HEK293T (cell line): ENCODE measurements at regions of chr1 and their contacts with region 1.

Region 1: DNA sequence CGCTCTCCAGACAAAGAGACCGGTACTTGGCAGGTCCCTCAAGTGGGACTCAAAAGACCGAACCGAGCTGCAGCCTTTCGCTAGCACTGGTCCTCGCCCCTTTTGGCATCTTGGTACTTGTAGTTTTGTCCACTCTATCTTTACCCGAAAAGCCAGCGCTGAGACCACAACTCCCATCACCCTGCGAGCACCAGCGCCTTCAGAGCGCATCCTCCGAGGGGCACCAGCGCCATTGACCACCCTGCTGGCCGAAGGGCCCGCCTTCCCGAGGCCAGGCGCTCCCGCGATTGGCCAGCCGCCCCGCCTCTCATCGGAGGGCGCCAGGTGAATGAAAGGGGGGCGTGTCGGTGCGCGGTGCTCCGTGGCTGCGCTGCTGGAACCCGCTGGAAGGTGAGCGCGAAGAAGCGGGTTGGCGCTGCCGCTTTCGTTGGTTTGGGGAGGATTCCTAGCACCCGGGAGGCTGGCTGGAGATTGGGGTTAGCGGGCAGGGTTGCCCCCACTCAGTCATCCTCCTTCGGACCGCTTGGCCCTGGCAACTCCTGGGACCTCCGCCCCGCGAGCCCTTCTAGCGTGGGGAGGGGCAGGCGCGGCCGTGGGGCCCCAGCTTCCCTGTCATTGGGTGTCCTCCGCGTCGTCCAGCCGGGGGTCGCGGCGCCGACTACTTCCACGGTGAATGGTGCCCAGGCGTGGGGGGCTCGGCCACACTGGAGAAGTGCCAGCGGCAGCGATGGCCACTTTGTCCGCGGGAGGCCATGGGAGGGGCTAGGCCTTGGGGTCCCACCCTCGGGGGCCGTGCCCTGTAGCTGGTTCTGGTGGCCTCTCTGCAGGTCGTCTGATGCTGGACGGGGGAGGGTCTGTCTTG is at the start of gene ZBTB8B:
- DNase-seq: peak; percentile 100

Region 2: DNA sequence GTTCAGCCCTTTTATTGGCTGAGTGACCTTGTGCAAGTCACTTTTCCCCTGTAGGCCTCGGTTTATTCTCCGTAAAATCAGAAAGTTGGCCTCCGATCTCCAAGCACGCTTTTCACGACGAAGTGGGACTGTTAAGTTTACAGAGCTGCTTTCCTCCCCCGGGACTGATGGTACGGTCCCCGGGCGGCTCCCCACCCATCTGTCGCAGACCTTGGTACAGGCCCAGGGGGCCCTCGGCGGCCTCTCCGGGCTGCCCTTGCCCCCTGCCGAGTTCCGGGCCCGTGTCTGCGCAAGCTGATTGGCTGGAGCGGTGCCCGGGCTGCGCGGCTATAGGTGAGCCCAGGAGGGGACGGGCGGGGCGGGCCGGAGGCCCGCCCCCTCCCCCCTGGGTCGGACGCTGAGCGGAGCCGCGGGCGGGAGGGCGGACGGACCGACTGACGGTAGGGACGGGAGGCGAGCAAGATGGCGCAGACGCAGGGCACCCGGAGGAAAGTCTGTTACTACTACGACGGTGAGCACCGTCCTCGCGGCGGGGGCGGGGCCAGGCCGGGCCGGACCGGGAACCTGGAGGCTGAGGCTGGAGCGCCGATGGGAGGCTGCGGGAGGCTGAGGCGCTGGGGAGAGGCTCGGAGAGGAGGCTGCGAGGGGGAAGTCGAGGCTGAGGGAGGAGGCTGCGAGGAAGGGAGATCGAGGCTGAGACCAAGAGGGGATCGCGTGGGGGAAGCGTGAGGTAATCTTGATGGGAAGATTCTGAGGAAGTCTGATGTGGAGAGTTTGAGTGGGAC is 173.0 kb before region 1 on chr1 and contains the start of gene HDAC1:
- CTCF ChIA-PET with region 1: no interaction called
- POLR2A ChIA-PET with region 1: no interaction called
- DNase-seq: peak; percentile 100

Region 3: DNA sequence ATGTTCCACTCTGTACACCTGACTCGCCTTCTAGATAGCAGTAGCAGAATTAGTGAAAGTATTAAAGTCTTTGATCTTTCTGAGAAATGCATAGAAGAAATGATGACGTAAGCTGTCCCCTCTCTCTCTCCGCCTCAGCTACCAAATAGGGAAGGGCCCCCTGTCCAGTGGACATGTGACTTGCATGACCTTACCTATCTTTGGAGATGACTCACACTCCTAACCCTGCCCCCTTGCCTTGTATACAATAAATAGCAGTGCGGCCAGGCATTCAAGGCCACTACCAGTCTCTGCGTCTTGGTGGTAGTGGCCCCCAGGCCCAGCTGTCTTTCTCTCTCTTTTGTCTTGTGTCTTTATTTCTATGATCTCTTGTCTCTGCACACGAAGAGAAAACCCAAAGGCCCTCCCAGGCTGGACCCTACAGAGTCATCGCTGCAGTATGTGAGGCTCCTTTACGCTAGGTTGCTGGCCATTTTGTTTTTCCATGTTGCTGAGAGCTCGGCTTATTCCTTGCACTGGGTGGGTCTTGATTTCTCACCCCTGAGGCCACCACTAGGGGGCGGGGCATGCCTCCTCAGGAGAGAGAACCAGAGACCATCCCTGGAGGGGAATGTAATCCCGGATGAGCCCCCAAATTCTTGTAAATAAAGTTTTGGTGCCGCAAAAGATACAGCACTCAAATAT is 16.0 kb before region 1 on chr1:
- CTCF ChIA-PET with region 1: interaction called, 7 read pairs
- POLR2A ChIA-PET with region 1: interaction called, 12 read pairs
- DNase-seq: peak; percentile 82